Activated CD4-positive, alpha-beta T cell treated with anti-CD3 and anti-CD28 coated beads for 36 hours (primary cell): ENCODE measurements at regions of chr15 and their contacts with region 1.

Region 1: GRCh38 chr15:31435261-31435911 is 108.8 kb downstream of the KLF13 start:
- DNase-seq: peak; percentile 92
- ATAC-seq: peak; percentile 73
- H3K4me3 Mint-ChIP-seq: peak overlapping the region; percentile 66
- H3K27ac Mint-ChIP-seq: peak overlapping the region; percentile 97
- H3K4me1 Mint-ChIP-seq: peaks cover 76% of the 10 kb centered on the region
- H3K27me3 Mint-ChIP-seq: no peaks in the 10 kb centered on the region

Region 2: DNA sequence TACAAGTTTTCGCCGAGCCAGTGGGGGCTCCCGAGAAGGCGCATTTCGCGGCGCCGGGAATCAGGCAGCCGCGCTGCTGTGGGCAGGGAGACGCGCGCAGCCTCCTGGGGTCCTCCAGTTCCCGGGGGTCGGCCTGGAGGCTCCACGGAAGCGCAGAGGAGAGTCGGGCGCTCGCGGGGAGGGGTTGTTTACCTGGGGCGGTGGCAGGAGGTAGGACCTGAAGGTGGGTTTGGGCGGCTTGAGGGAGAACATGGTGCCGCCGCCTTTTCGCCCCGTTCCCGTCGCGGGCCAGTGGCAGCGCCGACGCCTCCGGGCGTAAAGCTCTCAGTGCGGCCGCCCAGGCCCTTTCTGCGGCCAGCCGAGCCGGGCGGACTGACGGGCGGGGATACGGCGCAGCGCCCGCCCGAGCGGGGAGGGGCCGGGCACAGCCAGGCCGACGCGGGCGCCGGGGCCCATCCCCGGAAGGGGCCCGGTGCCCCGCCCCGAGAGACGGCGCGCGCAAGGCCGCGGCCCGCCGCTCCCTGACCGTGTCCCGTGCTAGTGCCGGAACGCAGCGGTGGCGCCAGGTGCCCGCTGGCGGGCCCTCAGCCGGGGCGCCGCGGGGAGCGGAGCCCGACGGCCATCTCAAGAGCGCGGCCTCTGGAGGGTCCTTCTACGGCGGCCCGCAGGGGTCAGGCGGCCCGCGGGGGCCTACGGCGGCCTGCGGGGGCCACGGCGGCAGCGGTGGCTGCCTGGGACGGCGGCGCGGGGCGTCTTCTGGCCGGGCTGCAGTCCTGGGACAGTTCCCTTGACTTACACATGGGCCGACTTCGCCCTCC is 443.9 kb before region 1 on chr15 and contains the start of gene MTMR10:
- CTCF ChIA-PET with region 1: no interaction called
- POLR2A ChIA-PET with region 1: no interaction called
- intact Hi-C with region 1: loop called in 1 of 2 experiments (anchors 1 kb)
- DNase-seq: peak; percentile 80
- ATAC-seq: peak; percentile 93
- H3K4me3 Mint-ChIP-seq: peak within 1 kb of the TSS; percentile 95
- H3K27ac Mint-ChIP-seq: peak within 1 kb of the TSS; percentile 84
- H3K4me1 Mint-ChIP-seq: peaks cover 27% of the 10 kb centered on the region
- H3K27me3 Mint-ChIP-seq: peaks cover 1% of the 10 kb centered on the region
- total RNA-seq, gene MTMR10: 10.1 to 17.6 TPM

Region 3: DNA sequence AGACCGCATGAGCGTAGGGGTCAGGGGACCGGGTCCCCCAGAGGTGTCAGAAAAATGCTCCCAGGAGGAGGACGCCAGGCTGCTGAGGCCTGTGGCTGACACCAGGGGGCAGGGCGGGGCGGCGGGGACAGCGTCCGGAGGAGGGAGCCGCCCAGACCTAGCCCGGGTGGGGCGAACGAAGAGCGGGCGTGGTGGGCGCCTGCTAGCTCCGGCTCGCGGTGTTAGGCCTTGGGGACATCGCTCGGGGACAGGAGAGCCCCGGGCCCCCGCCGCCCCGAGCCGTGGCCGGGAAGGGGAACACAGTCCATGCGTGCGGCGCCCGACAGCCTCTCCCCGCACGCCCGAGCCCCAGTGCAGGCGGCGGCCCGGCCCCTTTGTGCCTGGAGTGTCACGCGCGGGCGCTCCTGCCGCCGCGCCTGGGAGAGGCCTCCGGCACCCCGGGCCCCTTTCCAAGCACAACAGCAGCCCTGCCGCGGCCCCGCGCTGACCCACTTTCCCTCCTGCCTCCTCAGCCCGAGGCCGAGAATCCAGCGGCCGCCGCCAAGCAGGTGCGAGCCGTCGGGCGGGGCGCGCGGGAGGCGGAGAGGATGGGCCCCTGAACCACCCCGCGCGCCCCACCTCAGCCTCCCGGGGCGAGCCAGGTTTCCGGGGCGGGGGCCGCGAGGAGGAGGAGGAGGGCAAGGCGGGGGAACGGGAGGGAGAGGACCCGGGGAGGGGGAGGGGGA is 219.7 kb before region 1 on chr15:
- CTCF ChIA-PET with region 1: interaction called, 5 read pairs
- POLR2A ChIA-PET with region 1: no interaction called
- intact Hi-C with region 1: loop called in 1 of 2 experiments (anchors 1 kb)
- DNase-seq: peak; percentile 93
- ATAC-seq: peak; percentile 89
- H3K4me3 Mint-ChIP-seq: peak overlapping the region; percentile 72
- H3K27ac Mint-ChIP-seq: peak overlapping the region; percentile 56
- H3K4me1 Mint-ChIP-seq: peaks cover 17% of the 10 kb centered on the region
- H3K27me3 Mint-ChIP-seq: no peaks in the 10 kb centered on the region

Region 4: DNA sequence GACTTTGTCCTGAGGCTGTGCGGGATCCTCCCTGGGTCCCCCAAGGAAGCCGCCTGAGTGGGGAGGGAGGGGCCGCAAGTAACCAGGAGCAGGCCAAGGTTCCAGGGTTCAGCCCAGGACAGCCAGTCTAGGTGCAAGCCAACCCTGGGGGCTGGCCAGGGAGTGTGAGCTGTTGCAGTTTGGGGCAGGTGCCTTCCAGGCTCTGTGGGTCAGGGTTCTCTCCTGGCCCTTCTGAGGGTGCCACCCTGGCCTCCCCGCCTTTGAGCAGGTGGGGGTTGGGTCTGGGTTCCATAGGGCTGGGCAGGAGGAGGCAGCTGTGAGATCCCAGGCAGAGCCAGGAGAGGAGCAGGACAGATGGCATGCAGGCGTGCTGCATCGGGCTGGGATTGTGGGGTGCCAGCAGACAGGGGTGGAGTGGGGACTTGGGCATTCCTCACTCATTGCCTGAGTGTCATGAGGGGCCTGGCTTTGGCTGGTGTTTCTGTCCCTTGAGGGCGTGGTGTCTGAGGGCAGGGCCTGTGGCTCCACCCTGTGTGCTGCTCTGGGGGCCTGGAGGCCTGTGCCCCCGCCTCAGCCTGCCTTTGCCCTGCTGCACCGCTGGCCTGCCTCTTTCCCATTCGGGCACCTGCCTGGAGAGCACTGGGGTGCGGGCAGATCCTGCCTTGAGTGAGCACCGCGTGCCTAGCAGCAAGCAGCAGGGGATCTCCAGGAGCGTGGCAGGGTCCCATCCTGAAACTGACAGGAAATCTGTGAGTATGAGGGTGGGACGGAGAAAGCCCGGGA is 90.4 kb before region 1 on chr15:
- CTCF ChIA-PET with region 1: interaction called, 12 read pairs
- POLR2A ChIA-PET with region 1: interaction called, 6 read pairs
- intact Hi-C with region 1: loop called (anchors 1 kb)
- DNase-seq: peak; percentile 65
- ATAC-seq: peak; percentile 12
- H3K4me3 Mint-ChIP-seq: peak overlapping the region; percentile 87
- H3K27ac Mint-ChIP-seq: peak overlapping the region; percentile 97
- H3K4me1 Mint-ChIP-seq: peaks cover 97% of the 10 kb centered on the region
- H3K27me3 Mint-ChIP-seq: no peaks in the 10 kb centered on the region

Region 5: GRCh38 chr15:31391687-31392671 is 43.4 kb before region 1 on chr15:
- CTCF ChIA-PET with region 1: interaction called, 5 read pairs
- POLR2A ChIA-PET with region 1: interaction called, 6 read pairs
- intact Hi-C with region 1: loop called (anchors 1 to 2 kb)
- DNase-seq: peak; percentile 90
- ATAC-seq: peak; percentile 92
- H3K4me3 Mint-ChIP-seq: peak overlapping the region; percentile 80
- H3K27ac Mint-ChIP-seq: peak overlapping the region; percentile 71
- H3K4me1 Mint-ChIP-seq: peaks cover 40% of the 10 kb centered on the region
- H3K27me3 Mint-ChIP-seq: no peaks in the 10 kb centered on the region

Region 6: DNA sequence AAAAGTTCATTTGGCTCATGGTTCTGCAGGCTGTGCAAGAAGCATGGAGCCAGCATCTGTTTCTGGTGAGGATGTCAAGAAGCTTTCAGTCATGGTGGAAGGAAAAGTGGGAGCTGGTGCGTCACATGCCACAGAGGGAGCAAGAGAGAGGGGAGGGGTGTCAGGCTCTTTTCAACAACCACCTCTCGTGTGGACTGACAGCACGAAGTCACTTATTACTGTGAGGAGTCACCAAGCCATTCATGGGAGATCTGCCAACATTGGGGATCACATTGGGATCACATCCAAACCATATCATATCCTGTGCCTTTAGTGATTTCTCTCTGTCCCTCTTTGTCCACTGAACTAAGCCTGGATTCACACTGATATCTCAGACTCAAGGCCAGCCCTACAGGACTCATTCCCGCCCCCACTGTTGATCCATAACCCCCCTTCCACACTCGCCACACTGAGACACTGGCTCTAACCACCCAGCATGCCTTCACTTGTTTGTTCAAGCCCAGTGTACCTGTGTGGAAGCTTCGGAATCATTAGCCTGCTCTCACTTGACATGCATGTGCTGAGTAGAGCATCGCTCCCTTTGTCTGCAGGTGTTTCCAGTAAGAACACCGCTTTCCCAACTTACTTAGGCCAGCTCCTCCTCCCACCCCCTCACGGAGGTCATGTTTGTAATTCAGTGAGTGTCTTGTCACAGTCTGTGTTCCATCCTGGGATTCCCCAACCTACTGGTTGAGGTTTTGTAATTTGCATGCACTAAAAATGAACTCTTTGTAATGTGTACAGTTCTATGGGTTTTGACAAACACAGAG is 23.4 kb after region 1 on chr15:
- CTCF ChIA-PET with region 1: interaction called, 20 read pairs
- POLR2A ChIA-PET with region 1: interaction called, 10 read pairs
- intact Hi-C with region 1: loop called (anchors 1 kb)
- DNase-seq: peak; percentile 83
- ATAC-seq: peak; percentile 93
- H3K4me3 Mint-ChIP-seq: peak overlapping the region; percentile 70
- H3K27ac Mint-ChIP-seq: peak overlapping the region; percentile 92
- H3K4me1 Mint-ChIP-seq: peaks cover 45% of the 10 kb centered on the region
- H3K27me3 Mint-ChIP-seq: no peaks in the 10 kb centered on the region

Region 7: GRCh38 chr15:31609243-31609642 is 173.9 kb after region 1 on chr15:
- CTCF ChIA-PET with region 1: no interaction called
- POLR2A ChIA-PET with region 1: no interaction called
- intact Hi-C with region 1: no loop called
- DNase-seq: no peak
- ATAC-seq: no peak
- H3K4me3 Mint-ChIP-seq: no peak overlapping the region
- H3K27ac Mint-ChIP-seq: no peak overlapping the region
- H3K4me1 Mint-ChIP-seq: no peaks in the 10 kb centered on the region
- H3K27me3 Mint-ChIP-seq: peaks cover 26% of the 10 kb centered on the region

Region 8: GRCh38 chr15:31870328-31871165 is 435.2 kb after region 1 on chr15:
- CTCF ChIA-PET with region 1: no interaction called
- POLR2A ChIA-PET with region 1: no interaction called
- intact Hi-C with region 1: loop called in 1 of 2 experiments (anchors 5 kb)
- DNase-seq: peak; percentile 90
- ATAC-seq: peak; percentile 88
- H3K4me3 Mint-ChIP-seq: peak within 1 kb of the TSS; percentile 87
- H3K27ac Mint-ChIP-seq: peak within 1 kb of the TSS; percentile 79
- H3K4me1 Mint-ChIP-seq: peaks cover 10% of the 10 kb centered on the region
- H3K27me3 Mint-ChIP-seq: peaks cover 9% of the 10 kb centered on the region